CD8-positive, alpha-beta T cell (primary cell): ENCODE measurements at regions of chr21 and their contacts with region 1.

Region 1: GRCh38 chr21:15483138-15483780 is 246.5 kb upstream of the USP25 start:
- DNase-seq: peak; percentile 46 to 87 (median 79)
- ATAC-seq: peak; percentile 99
- H3K4me3 ChIP-seq: no peak overlapping the region
- H3K4me3 Mint-ChIP-seq: no peak overlapping the region
- H3K27ac ChIP-seq: no peak overlapping the region
- H3K27ac Mint-ChIP-seq: no peak overlapping the region
- H3K4me1 ChIP-seq: no peaks in the 10 kb centered on the region
- H3K4me1 Mint-ChIP-seq: peaks cover 15% of the 10 kb centered on the region
- H3K27me3 ChIP-seq: no peaks in the 10 kb centered on the region
- H3K27me3 Mint-ChIP-seq: no peaks in the 10 kb centered on the region
- CTCF ChIP-seq: peak; percentile 89

Region 2: GRCh38 chr21:14382835-14383594 is 1100.2 kb before region 1 on chr21 and contains the start of gene HSPA13:
- CTCF ChIA-PET with region 1: interaction called, 3 read pairs
- POLR2A ChIA-PET with region 1: no interaction called
- intact Hi-C with region 1: loop called in 1 of 2 experiments (anchors 5 kb)
- DNase-seq: peak; percentile 97 to 100 (median 99)
- ATAC-seq: peak; percentile 91
- H3K4me3 ChIP-seq: peak within 1 kb of the TSS; percentile 65 to 92
- H3K4me3 Mint-ChIP-seq: peak within 1 kb of the TSS; percentile 100
- H3K27ac ChIP-seq: peak within 1 kb of the TSS; percentile 94 to 96
- H3K27ac Mint-ChIP-seq: peak within 1 kb of the TSS; percentile 100
- H3K4me1 ChIP-seq: peaks cover 24% of the 10 kb centered on the region
- H3K4me1 Mint-ChIP-seq: peaks cover 40% of the 10 kb centered on the region
- H3K27me3 ChIP-seq: no peaks in the 10 kb centered on the region
- H3K27me3 Mint-ChIP-seq: no peaks in the 10 kb centered on the region
- CTCF ChIP-seq: no peak
- total RNA-seq, gene HSPA13: 54.3 to 58.1 TPM

Region 3: DNA sequence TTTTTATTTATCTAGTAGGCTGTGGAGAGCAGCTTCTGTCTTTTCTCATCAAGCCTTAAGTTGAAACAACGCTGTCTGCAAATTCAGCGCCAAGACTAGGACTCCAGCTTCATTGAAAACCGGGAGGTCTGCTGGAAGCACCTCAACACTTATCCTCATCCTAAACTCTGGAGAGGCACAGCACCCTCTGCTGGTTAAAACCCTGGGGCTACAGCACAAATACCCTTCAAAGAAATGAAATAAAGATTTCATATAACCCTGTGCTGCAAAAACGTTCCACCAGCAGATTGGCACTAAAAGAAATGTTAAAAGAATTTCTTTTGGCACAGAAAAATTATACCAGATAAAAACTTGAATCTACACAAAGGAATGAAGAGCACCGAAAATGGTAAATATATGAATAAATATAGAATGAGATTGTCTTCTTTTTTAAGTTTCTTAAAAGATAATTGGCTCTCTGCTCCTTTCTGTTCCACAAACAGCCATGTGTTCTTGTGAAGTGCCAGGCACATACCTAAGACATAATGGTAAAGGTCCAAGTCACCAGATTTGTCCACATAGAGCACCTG is 709.4 kb before region 1 on chr21:
- CTCF ChIA-PET with region 1: no interaction called
- POLR2A ChIA-PET with region 1: no interaction called
- intact Hi-C with region 1: loop called in 1 of 2 experiments (anchors 10 kb)
- DNase-seq: peak; percentile 5 to 63 (median 50)
- ATAC-seq: no peak
- H3K4me3 ChIP-seq: no peak overlapping the region
- H3K4me3 Mint-ChIP-seq: no peak overlapping the region
- H3K27ac ChIP-seq: no peak overlapping the region
- H3K27ac Mint-ChIP-seq: no peak overlapping the region
- H3K4me1 ChIP-seq: no peaks in the 10 kb centered on the region
- H3K4me1 Mint-ChIP-seq: no peaks in the 10 kb centered on the region
- H3K27me3 ChIP-seq: no peaks in the 10 kb centered on the region
- H3K27me3 Mint-ChIP-seq: no peaks in the 10 kb centered on the region
- CTCF ChIP-seq: peak; percentile 64

Region 4: DNA sequence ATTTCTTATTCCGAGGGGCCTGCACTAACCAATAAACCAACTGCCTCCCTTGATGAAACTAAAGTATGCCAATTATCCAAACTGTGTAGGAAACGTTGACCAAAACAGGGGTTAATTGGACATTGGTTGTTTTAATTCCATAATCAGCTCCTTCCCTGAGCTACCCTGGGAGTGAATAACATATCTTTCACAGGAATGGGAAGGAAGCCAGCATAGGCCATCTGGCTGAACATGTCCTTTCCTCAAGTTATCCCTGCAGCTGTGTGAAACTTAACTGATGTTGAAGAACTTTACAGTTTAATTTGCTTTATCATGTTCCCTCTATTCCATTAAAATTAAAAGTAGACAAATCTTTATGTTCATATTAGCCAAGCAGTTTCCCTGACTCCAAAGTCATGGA is 493.9 kb before region 1 on chr21:
- CTCF ChIA-PET with region 1: no interaction called
- POLR2A ChIA-PET with region 1: no interaction called
- intact Hi-C with region 1: no loop called
- DNase-seq: no peak
- ATAC-seq: no peak
- H3K4me3 ChIP-seq: no peak overlapping the region
- H3K4me3 Mint-ChIP-seq: no peak overlapping the region
- H3K27ac ChIP-seq: no peak overlapping the region
- H3K27ac Mint-ChIP-seq: no peak overlapping the region
- H3K4me1 ChIP-seq: no peaks in the 10 kb centered on the region
- H3K4me1 Mint-ChIP-seq: peaks cover 19% of the 10 kb centered on the region
- H3K27me3 ChIP-seq: no peaks in the 10 kb centered on the region
- H3K27me3 Mint-ChIP-seq: no peaks in the 10 kb centered on the region
- CTCF ChIP-seq: no peak

Region 5: GRCh38 chr21:15514073-15514946 is 31.1 kb after region 1 on chr21:
- CTCF ChIA-PET with region 1: interaction called, 6 read pairs
- POLR2A ChIA-PET with region 1: no interaction called
- intact Hi-C with region 1: loop called in 1 of 2 experiments (anchors 1 kb)
- DNase-seq: peak; percentile 11 to 84 (median 65)
- ATAC-seq: peak; percentile 99
- H3K4me3 ChIP-seq: peak overlapping the region in 1 of 2 experiments; percentile 0
- H3K4me3 Mint-ChIP-seq: peak overlapping the region; percentile 39
- H3K27ac ChIP-seq: peak overlapping the region; percentile 33 to 78
- H3K27ac Mint-ChIP-seq: peak overlapping the region; percentile 85
- H3K4me1 ChIP-seq: peaks cover 25% of the 10 kb centered on the region
- H3K4me1 Mint-ChIP-seq: peaks cover 25% of the 10 kb centered on the region
- H3K27me3 ChIP-seq: no peaks in the 10 kb centered on the region
- H3K27me3 Mint-ChIP-seq: no peaks in the 10 kb centered on the region
- CTCF ChIP-seq: no peak

Region 6: GRCh38 chr21:15552914-15553494 is 69.7 kb after region 1 on chr21:
- CTCF ChIA-PET with region 1: interaction called, 57 read pairs
- POLR2A ChIA-PET with region 1: no interaction called
- intact Hi-C with region 1: loop called in 1 of 2 experiments (anchors 1 kb)
- DNase-seq: peak in 2 of 9 experiments; percentile 19 to 33
- ATAC-seq: no peak
- H3K4me3 ChIP-seq: no peak overlapping the region
- H3K4me3 Mint-ChIP-seq: no peak overlapping the region
- H3K27ac ChIP-seq: no peak overlapping the region
- H3K27ac Mint-ChIP-seq: no peak overlapping the region
- H3K4me1 ChIP-seq: peaks cover 8% of the 10 kb centered on the region
- H3K4me1 Mint-ChIP-seq: peaks cover 14% of the 10 kb centered on the region
- H3K27me3 ChIP-seq: no peaks in the 10 kb centered on the region
- H3K27me3 Mint-ChIP-seq: no peaks in the 10 kb centered on the region
- CTCF ChIP-seq: peak; percentile 71